GM12878 (cell line): ENCODE measurements at regions of chr1 and their contacts with region 1.

Region 1: DNA sequence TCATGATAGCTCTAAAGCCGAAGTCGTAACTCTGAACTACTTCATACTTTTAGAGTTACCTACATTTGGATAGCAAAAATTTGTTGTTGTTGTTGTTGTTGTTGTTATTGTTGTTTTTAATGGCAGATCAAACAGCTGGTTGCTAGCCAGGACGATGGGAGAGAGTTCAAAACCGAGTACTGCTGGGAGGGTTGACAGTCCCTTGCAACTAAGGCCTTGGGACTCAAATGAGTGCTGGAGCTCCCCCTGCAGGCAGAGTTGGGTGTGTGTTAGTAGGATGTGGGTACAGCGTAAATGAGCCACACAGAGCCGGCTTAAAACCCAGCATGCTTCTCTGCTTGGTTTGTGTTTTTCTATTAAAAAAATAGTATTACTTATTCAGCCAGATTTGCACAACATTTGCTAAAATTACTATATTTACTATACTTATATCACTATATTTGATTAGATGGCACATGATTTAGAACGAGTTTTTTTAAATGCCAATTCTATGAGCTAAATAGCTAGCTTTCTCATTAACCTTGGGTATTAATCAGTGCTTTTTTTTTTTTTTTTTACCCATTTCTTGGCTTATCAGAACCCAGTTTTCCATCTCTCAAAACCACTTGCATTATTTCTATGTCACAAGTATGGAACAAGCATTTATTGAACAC is 129.2 kb upstream of the SYT6 start:
- DNase-seq: peak; percentile 36
- ATAC-seq: peak; percentile 100
- H3K4me3 ChIP-seq: no peak overlapping the region
- H3K27ac ChIP-seq: no peak overlapping the region
- H3K4me1 ChIP-seq: no peaks in the 10 kb centered on the region
- H3K27me3 ChIP-seq: no peaks in the 10 kb centered on the region; a peak in 1 of 4 replicates
- CTCF ChIP-seq: peak; percentile 80 to 89 (median 88)
- EP300 ChIP-seq: no peak
- POLR2A ChIP-seq: no peak
- RAD21 ChIP-seq: peak; percentile 88

Region 2: GRCh38 chr1:113760102-113761080 is 522.5 kb before region 1 on chr1:
- CTCF ChIA-PET with region 1: no interaction called
- POLR2A ChIA-PET with region 1: no interaction called
- RAD21 ChIA-PET with region 1: no interaction called
- SMC1A ChIA-PET with region 1: no interaction called
- in situ Hi-C with region 1: no loop called
- intact Hi-C with region 1: no loop called
- DNase-seq: no peak
- ATAC-seq: no peak
- H3K4me3 ChIP-seq: peak overlapping the region; percentile 85
- H3K27ac ChIP-seq: peak overlapping the region; percentile 94
- H3K4me1 ChIP-seq: no peaks in the 10 kb centered on the region; the same call in 1 of the 2 replicates
- H3K27me3 ChIP-seq: no peaks in the 10 kb centered on the region
- CTCF ChIP-seq: no peak
- EP300 ChIP-seq: no peak
- POLR2A ChIP-seq: no peak
- RAD21 ChIP-seq: no peak

Region 3: GRCh38 chr1:113991467-113991997 is 291.3 kb before region 1 on chr1:
- CTCF ChIA-PET with region 1: interaction called, 6 read pairs
- POLR2A ChIA-PET with region 1: no interaction called
- RAD21 ChIA-PET with region 1: interaction called, 4 read pairs
- SMC1A ChIA-PET with region 1: interaction called, 10 read pairs
- in situ Hi-C with region 1: no loop called
- intact Hi-C with region 1: no loop called
- DNase-seq: peak; percentile 31
- ATAC-seq: peak; percentile 84
- H3K4me3 ChIP-seq: no peak overlapping the region
- H3K27ac ChIP-seq: no peak overlapping the region; the same call in 1 of the 2 replicates
- H3K4me1 ChIP-seq: no peaks in the 10 kb centered on the region
- H3K27me3 ChIP-seq: no peaks in the 10 kb centered on the region
- CTCF ChIP-seq: no peak
- EP300 ChIP-seq: no peak
- POLR2A ChIP-seq: no peak
- RAD21 ChIP-seq: no peak

Region 4: DNA sequence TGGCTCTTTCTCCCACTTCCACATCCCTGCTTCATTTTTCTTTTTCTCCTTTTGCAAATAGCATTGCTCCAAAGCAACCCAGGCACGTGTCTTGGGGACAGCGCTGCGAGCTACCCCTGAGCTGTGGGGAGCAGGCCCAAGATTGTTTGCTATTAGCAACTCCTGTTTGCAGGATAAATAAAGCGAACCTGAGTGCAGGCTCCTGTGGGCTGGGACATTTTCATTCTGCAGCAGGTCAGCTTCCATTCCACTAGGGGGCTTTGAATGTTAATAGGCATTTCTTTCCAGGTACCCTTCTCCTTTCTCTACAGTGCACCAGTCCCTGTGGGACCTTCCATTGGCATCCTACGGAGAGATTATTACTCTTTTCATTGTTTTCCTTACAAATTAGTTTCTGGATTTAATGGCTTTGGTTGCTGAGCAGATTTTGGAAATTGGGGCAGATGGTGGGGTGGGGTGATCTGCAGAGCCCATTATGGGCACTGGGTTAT is 249.6 kb before region 1 on chr1:
- CTCF ChIA-PET with region 1: interaction called, 13 read pairs
- POLR2A ChIA-PET with region 1: no interaction called
- RAD21 ChIA-PET with region 1: interaction called, 8 read pairs
- SMC1A ChIA-PET with region 1: no interaction called
- in situ Hi-C with region 1: no loop called
- intact Hi-C with region 1: loop called (anchors 5 kb)
- DNase-seq: no peak
- ATAC-seq: peak; percentile 65
- H3K4me3 ChIP-seq: no peak overlapping the region
- H3K27ac ChIP-seq: no peak overlapping the region
- H3K4me1 ChIP-seq: no peaks in the 10 kb centered on the region
- H3K27me3 ChIP-seq: no peaks in the 10 kb centered on the region; a peak in 3 of 4 replicates
- CTCF ChIP-seq: peak; percentile 29 to 45 (median 40)
- EP300 ChIP-seq: no peak
- POLR2A ChIP-seq: no peak
- RAD21 ChIP-seq: peak; percentile 27; the same call in 1 of the 2 replicates

Region 5: GRCh38 chr1:114108751-114109255 is 174.1 kb before region 1 on chr1:
- CTCF ChIA-PET with region 1: interaction called, 11 read pairs
- POLR2A ChIA-PET with region 1: no interaction called
- RAD21 ChIA-PET with region 1: interaction called, 5 read pairs
- SMC1A ChIA-PET with region 1: interaction called, 3 read pairs
- in situ Hi-C with region 1: no loop called
- intact Hi-C with region 1: loop called (anchors 10 kb)
- DNase-seq: peak; percentile 55
- ATAC-seq: peak; percentile 73
- H3K4me3 ChIP-seq: no peak overlapping the region
- H3K27ac ChIP-seq: no peak overlapping the region
- H3K4me1 ChIP-seq: peaks cover 7% of the 10 kb centered on the region; the same call in 1 of the 2 replicates
- H3K27me3 ChIP-seq: no peaks in the 10 kb centered on the region; a peak in 1 of 4 replicates
- CTCF ChIP-seq: no peak
- EP300 ChIP-seq: no peak
- POLR2A ChIP-seq: no peak
- RAD21 ChIP-seq: no peak

Region 6: DNA sequence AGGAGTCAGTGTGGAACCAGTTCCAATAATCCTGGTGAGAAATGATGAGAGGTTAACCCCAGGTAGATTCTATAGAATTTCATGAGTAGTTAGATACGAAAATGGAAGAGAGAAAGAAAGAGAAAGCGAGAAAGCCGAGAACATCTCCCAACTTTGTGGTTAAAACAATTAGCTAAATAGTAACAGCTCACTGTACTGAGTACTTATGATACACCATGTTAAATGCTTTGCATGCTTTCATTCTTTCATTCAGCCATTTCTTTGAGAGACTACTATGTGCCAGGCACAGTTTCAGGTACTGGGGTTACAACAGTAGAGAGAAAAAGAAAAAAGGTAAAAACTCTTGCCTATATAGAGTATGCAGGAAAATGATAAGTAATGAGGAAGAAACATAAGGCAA is 19.5 kb before region 1 on chr1:
- CTCF ChIA-PET with region 1: interaction called, 17 read pairs
- POLR2A ChIA-PET with region 1: no interaction called
- RAD21 ChIA-PET with region 1: no interaction called
- SMC1A ChIA-PET with region 1: no interaction called
- in situ Hi-C with region 1: no loop called
- intact Hi-C with region 1: no loop called
- DNase-seq: peak; percentile 26
- ATAC-seq: peak; percentile 87
- H3K4me3 ChIP-seq: no peak overlapping the region
- H3K27ac ChIP-seq: no peak overlapping the region
- H3K4me1 ChIP-seq: no peaks in the 10 kb centered on the region
- H3K27me3 ChIP-seq: no peaks in the 10 kb centered on the region; a peak in 2 of 4 replicates
- CTCF ChIP-seq: no peak
- EP300 ChIP-seq: no peak
- POLR2A ChIP-seq: no peak
- RAD21 ChIP-seq: no peak

Region 7: GRCh38 chr1:114386129-114387009 is 103.5 kb after region 1 on chr1:
- CTCF ChIA-PET with region 1: no interaction called
- POLR2A ChIA-PET with region 1: no interaction called
- RAD21 ChIA-PET with region 1: no interaction called
- SMC1A ChIA-PET with region 1: no interaction called
- in situ Hi-C with region 1: no loop called
- intact Hi-C with region 1: no loop called
- DNase-seq: no peak
- ATAC-seq: no peak
- H3K4me3 ChIP-seq: no peak overlapping the region
- H3K27ac ChIP-seq: no peak overlapping the region
- H3K4me1 ChIP-seq: no peaks in the 10 kb centered on the region
- H3K27me3 ChIP-seq: no peaks in the 10 kb centered on the region
- CTCF ChIP-seq: no peak
- EP300 ChIP-seq: no peak
- POLR2A ChIP-seq: no peak
- RAD21 ChIP-seq: no peak

Region 8: DNA sequence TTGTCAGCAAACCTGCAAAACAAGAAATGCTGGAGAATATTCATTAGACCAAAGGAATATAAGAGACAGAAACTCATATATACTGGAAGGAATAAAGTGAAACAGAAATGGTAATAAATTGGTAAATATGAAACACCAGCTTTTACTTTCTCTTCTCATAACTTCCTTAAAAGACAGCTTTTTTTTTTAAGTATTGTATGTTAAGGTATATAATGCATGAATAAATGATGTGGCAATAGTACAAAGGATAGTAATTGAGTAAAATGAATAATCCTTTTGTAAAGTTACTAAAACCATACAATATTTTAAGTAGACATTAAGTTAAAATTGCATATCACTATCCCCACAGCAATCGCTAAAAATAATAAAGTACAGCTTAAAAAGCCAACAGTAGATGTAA is 163.3 kb after region 1 on chr1:
- CTCF ChIA-PET with region 1: no interaction called
- POLR2A ChIA-PET with region 1: no interaction called
- RAD21 ChIA-PET with region 1: no interaction called
- SMC1A ChIA-PET with region 1: no interaction called
- in situ Hi-C with region 1: no loop called
- intact Hi-C with region 1: no loop called
- DNase-seq: no peak
- ATAC-seq: 0 out of 3 replicates have a peak, but pooled peaks have one; percentile 33
- H3K4me3 ChIP-seq: no peak overlapping the region
- H3K27ac ChIP-seq: no peak overlapping the region
- H3K4me1 ChIP-seq: no peaks in the 10 kb centered on the region
- H3K27me3 ChIP-seq: no peaks in the 10 kb centered on the region
- CTCF ChIP-seq: no peak
- EP300 ChIP-seq: no peak
- POLR2A ChIP-seq: no peak
- RAD21 ChIP-seq: no peak

Region 9: GRCh38 chr1:114468710-114469468 is 186.0 kb after region 1 on chr1:
- CTCF ChIA-PET with region 1: no interaction called
- POLR2A ChIA-PET with region 1: no interaction called
- RAD21 ChIA-PET with region 1: no interaction called
- SMC1A ChIA-PET with region 1: no interaction called
- in situ Hi-C with region 1: no loop called
- intact Hi-C with region 1: no loop called
- DNase-seq: no peak
- ATAC-seq: peak; percentile 41
- H3K4me3 ChIP-seq: no peak overlapping the region
- H3K27ac ChIP-seq: no peak overlapping the region
- H3K4me1 ChIP-seq: peaks cover 12% of the 10 kb centered on the region
- H3K27me3 ChIP-seq: no peaks in the 10 kb centered on the region
- CTCF ChIP-seq: no peak
- EP300 ChIP-seq: no peak
- POLR2A ChIP-seq: no peak
- RAD21 ChIP-seq: no peak